Spleen (tissue), 13 donors: ENCODE measurements at regions of chr3 and their contacts with region 1.

Region 1: DNA sequence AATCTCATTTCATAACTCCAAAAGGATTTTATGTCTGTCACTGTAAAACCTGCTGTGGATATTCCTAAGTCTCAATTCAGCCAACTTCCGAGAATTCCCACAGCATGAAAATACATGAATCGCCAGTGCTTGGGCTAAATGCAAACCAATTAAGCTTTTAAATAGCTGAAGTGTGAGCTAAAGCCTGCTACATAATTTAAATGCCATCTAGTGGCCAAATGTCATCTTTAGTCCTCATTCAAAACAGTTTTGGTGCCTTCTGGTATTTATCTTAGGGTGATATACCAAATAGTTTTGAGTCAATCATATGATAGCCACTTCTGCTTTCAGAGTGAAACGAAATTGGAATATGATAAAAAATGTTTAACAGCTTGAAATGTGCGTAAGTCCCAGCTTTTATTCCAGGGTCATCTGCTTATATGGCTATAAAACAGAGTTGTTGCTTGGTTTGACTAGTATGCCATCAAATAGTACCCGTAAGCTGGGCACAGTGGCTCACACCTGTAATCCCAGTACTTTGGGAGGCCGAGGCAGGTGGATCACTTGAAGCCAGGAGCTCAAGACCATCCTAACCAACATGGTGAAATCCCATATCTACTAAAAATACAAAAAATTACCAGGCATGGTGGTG is 41.8 kb upstream of the CCNL1 start:
- DNase-seq: no peak
- H3K4me3 ChIP-seq: no peak overlapping the region
- H3K27ac ChIP-seq: no peak overlapping the region
- H3K4me1 ChIP-seq: peaks cover 0 to 10% (median 4%) of the 10 kb centered on the region in 6 donors
- H3K27me3 ChIP-seq: no peaks in the 10 kb centered on the region
- CTCF ChIP-seq: peak in 10 of 11 experiments; percentile 29 to 64 (median 54)
- POLR2A ChIP-seq: no peak

Region 2: GRCh38 chr3:156151824-156152428 is 1049.8 kb before region 1 on chr3:
- intact Hi-C with region 1: loop called (anchors 5 kb)
- DNase-seq: peak; percentile 82
- H3K4me3 ChIP-seq: no peak overlapping the region
- H3K27ac ChIP-seq: no peak overlapping the region
- H3K4me1 ChIP-seq: peaks cover 0 to 18% (median 8%) of the 10 kb centered on the region in 6 donors
- H3K27me3 ChIP-seq: no peaks in the 10 kb centered on the region
- CTCF ChIP-seq: peak in 10 of 11 experiments; percentile 32 to 73 (median 57)
- POLR2A ChIP-seq: no peak

Region 3: GRCh38 chr3:157493627-157494550 is 292.1 kb after region 1 on chr3:
- intact Hi-C with region 1: loop called (anchors 5 kb)
- DNase-seq: no peak
- H3K4me3 ChIP-seq: no peak overlapping the region
- H3K27ac ChIP-seq: no peak overlapping the region
- H3K4me1 ChIP-seq: peaks cover 0 to 1% (median 0%) of the 10 kb centered on the region in 6 donors
- H3K27me3 ChIP-seq: peaks cover 0 to 18% (median 0%) of the 10 kb centered on the region in 7 donors
- CTCF ChIP-seq: peak; percentile 27 to 66 (median 49)
- POLR2A ChIP-seq: no peak